HEK293 (cell line): ENCODE measurements at regions of chr17 and their contacts with region 1.

Region 1: DNA sequence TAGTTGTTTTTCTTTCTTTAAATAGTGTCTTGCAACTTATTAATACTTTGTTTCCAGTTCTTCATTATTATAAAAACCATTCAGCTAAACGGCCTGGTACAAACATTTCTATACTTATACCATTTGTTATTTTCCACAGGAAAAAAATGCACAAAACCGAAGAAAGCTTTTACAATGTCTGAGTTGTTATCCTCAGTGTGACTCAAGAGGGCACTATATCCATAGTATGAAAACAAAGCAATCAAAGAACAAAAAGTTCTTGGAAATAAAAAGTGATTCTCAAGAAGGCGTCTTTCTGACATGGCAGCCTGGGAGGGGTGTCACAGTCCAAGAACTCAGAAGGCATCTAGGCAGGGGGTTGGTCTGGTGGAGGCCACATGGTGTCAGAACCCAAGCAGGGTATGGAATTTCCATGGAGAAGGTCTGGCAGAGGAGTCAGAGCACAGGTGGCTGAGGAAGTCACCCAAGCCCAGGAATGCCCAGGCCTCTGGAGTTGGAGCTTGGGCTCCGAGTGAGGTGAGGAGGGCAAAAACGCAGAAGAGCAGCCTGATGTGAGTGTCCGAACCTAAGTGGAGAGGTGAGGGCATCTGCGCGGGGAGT is 70.9 kb upstream of the ATP2A3 start:
- H3K4me3 ChIP-seq: no peak overlapping the region
- H3K27ac ChIP-seq: no peak overlapping the region
- H3K4me1 ChIP-seq: no peaks in the 10 kb centered on the region
- CTCF ChIP-seq: no peak

Region 2: GRCh38 chr17:3954086-3954485 is 81.1 kb before region 1 on chr17:
- CTCF ChIA-PET with region 1: no interaction called
- POLR2A ChIA-PET with region 1: no interaction called
- H3K4me3 ChIP-seq: no peak overlapping the region
- H3K27ac ChIP-seq: no peak overlapping the region
- H3K4me1 ChIP-seq: peaks cover under 1% of the 10 kb centered on the region
- CTCF ChIP-seq: no peak

Region 3: DNA sequence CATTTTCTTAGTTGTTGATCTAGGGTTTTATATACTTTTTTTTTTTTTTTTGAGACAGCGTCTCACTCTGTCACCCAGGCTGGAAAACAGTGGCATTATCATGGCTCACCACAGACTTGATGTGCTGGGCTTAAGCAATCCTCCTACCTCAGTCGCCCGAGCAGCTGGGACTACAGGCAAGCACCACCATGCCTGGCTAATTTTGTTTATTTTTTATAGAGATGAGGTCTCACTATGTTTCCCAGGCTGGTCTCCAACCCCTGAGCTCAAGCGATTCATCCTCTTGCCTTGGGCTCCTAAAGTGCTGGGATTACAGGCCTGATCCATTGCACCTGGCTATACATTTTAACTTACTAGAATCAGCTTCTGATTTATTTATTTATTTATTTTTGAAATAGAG is 36.7 kb before region 1 on chr17:
- CTCF ChIA-PET with region 1: no interaction called
- POLR2A ChIA-PET with region 1: no interaction called
- H3K4me3 ChIP-seq: no peak overlapping the region
- H3K27ac ChIP-seq: no peak overlapping the region
- H3K4me1 ChIP-seq: no peaks in the 10 kb centered on the region
- CTCF ChIP-seq: no peak

Region 4: DNA sequence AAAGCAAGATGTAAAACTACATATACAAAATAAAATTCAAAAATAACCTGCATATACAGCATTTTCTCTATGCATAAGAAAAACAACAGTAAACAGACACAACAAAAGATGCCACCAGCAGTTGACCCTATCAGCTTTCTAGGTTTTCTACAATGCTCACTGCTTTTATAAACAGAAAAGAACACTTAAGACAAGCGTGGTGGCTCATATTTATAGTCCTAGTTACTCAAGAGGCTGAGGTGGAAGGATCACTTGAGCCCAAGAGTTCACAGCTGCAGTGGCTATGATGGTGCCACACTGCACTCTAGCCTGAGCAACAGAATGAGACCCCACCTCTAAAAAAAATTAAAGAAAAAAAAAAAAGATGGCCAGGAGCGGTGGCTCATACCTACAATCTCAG is 24.4 kb before region 1 on chr17:
- CTCF ChIA-PET with region 1: interaction called, 10 read pairs
- POLR2A ChIA-PET with region 1: no interaction called
- H3K4me3 ChIP-seq: no peak overlapping the region
- H3K27ac ChIP-seq: no peak overlapping the region
- H3K4me1 ChIP-seq: no peaks in the 10 kb centered on the region
- CTCF ChIP-seq: no peak

Region 5: GRCh38 chr17:4087906-4088693 is 52.9 kb after region 1 on chr17:
- CTCF ChIA-PET with region 1: no interaction called
- POLR2A ChIA-PET with region 1: no interaction called
- H3K4me3 ChIP-seq: no peak overlapping the region
- H3K27ac ChIP-seq: no peak overlapping the region
- H3K4me1 ChIP-seq: no peaks in the 10 kb centered on the region
- CTCF ChIP-seq: no peak

Region 6: GRCh38 chr17:4130715-4131114 is 95.5 kb after region 1 on chr17:
- CTCF ChIA-PET with region 1: no interaction called
- POLR2A ChIA-PET with region 1: no interaction called
- H3K4me3 ChIP-seq: no peak overlapping the region
- H3K27ac ChIP-seq: peak overlapping the region; percentile 24; the same call in 1 of the 2 replicates
- H3K4me1 ChIP-seq: peaks cover 9% of the 10 kb centered on the region
- CTCF ChIP-seq: no peak